ENCODE measurements at regions of chr16 and their contacts with region 1.

Region 1: GRCh38 chr16:3961449-3961849 is 80.9 kb upstream of the CREBBP start:
- DNase-seq: no peak
- H3K4me3 Mint-ChIP-seq: peak overlapping the region; percentile 79
- H3K27ac Mint-ChIP-seq: peak overlapping the region; percentile 89
- H3K4me1 Mint-ChIP-seq: peaks cover 7% of the 10 kb centered on the region
- H3K27me3 Mint-ChIP-seq: peaks cover 14% of the 10 kb centered on the region
- CTCF ChIP-seq: no peak

Region 2: GRCh38 chr16:3873482-3874173 is 87.8 kb before region 1 on chr16:
- CTCF ChIA-PET with region 1: no interaction called
- POLR2A ChIA-PET with region 1: no interaction called
- intact Hi-C with region 1: no loop called
- DNase-seq: no peak
- H3K4me3 Mint-ChIP-seq: no peak overlapping the region
- H3K27ac Mint-ChIP-seq: no peak overlapping the region
- H3K4me1 Mint-ChIP-seq: peaks cover 61% of the 10 kb centered on the region
- H3K27me3 Mint-ChIP-seq: no peaks in the 10 kb centered on the region
- CTCF ChIP-seq: no peak

Region 3: DNA sequence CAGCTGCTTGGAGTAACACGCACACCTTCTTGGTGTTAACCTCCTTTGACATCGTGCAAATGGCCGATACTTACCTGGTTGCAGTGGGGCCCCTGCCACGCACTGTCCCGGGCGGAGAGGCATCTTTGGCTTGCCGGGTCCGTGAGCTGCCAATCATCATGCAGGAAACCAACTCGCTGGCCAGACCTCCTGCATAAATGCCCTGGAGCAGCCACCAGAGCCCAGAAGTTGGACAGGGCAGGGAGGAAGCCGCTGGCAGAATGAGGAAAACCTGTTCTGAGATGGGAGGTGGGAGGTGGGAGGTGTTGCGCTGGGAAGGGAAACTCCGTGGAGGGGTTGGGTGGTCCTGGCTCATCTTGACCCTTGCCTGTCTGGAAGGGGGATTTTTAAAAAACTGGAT is 39.2 kb before region 1 on chr16:
- CTCF ChIA-PET with region 1: no interaction called
- POLR2A ChIA-PET with region 1: no interaction called
- intact Hi-C with region 1: no loop called
- DNase-seq: no peak
- H3K4me3 Mint-ChIP-seq: no peak overlapping the region
- H3K27ac Mint-ChIP-seq: no peak overlapping the region
- H3K4me1 Mint-ChIP-seq: no peaks in the 10 kb centered on the region
- H3K27me3 Mint-ChIP-seq: peaks cover 12% of the 10 kb centered on the region
- CTCF ChIP-seq: no peak

Region 4: GRCh38 chr16:3950343-3951193 is 10.9 kb before region 1 on chr16:
- CTCF ChIA-PET with region 1: no interaction called
- POLR2A ChIA-PET with region 1: interaction called, 11 read pairs
- intact Hi-C with region 1: no loop called
- DNase-seq: peak; percentile 95
- H3K4me3 Mint-ChIP-seq: peak overlapping the region; percentile 38
- H3K27ac Mint-ChIP-seq: peak overlapping the region; percentile 68
- H3K4me1 Mint-ChIP-seq: peaks cover 22% of the 10 kb centered on the region
- H3K27me3 Mint-ChIP-seq: peaks cover 10% of the 10 kb centered on the region
- CTCF ChIP-seq: no peak

Measured in MCF 10A (cell line).